Heart left ventricle (tissue), 16 donors: ENCODE measurements at regions of chr11 and their contacts with region 1.

Region 1: DNA sequence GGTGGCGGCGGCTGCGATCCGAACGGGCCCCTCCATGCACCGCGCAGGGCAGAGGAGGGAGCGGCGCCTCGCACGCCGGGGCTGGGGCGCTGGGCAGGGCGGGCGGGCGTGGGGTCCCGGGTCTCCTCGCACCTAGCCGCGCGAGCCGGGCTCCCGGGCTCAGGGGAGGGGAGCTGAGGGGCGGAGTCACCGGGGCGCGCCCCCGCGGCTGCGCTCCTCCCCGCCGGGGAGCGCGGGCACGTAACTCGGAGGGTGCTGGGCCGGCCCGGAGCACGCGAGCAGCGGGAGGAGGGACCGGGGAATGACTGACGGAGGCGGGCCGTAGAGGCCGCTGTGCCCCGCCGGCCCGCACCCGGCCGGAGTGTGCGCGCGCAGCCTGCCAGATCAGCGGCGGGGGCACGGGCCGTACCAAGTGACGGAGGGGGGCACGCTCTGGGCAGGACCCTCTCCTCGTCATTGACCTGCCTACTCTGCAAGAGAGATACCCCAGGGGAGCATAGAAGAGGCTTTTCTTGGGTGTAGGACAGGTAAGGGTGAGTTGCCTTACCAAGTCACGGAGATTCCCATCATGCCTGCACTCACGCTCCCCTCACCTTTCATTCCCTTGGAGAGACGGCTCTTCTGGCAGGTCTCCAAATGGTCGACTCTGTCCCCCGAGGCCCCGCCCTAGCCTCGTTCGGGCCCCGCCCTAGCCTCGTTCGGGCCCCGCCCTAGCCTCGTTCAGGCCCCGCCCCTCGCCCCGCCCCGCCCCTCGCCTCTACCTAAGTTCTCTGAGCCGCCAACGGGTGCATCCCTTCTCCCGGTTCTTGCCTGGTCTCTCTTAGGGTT is at the start of gene CDON:
- DNase-seq: peak; percentile 91 to 95 (median 93)
- ATAC-seq: peak; percentile 98 to 99 (median 98)
- H3K4me3 ChIP-seq: peak within 1 kb of the TSS; percentile 60 to 94 (median 73)
- H3K27ac ChIP-seq: peak within 1 kb of the TSS in 11 of 12 donors; percentile 50 to 85 (median 75)
- H3K4me1 ChIP-seq: peaks cover 0 to 20% (median 8%) of the 10 kb centered on the region in 12 donors
- H3K27me3 ChIP-seq: peaks cover 0 to 12% (median 0%) of the 10 kb centered on the region in 9 donors
- CTCF ChIP-seq: peak in 7 of 12 donors; percentile 8 to 51 (median 29)
- POLR2A ChIP-seq: peak in 1 of 2 donors; percentile 54
- total RNA-seq, gene CDON: 5.0 to 51.5 (median 7.4) TPM

Region 2: DNA sequence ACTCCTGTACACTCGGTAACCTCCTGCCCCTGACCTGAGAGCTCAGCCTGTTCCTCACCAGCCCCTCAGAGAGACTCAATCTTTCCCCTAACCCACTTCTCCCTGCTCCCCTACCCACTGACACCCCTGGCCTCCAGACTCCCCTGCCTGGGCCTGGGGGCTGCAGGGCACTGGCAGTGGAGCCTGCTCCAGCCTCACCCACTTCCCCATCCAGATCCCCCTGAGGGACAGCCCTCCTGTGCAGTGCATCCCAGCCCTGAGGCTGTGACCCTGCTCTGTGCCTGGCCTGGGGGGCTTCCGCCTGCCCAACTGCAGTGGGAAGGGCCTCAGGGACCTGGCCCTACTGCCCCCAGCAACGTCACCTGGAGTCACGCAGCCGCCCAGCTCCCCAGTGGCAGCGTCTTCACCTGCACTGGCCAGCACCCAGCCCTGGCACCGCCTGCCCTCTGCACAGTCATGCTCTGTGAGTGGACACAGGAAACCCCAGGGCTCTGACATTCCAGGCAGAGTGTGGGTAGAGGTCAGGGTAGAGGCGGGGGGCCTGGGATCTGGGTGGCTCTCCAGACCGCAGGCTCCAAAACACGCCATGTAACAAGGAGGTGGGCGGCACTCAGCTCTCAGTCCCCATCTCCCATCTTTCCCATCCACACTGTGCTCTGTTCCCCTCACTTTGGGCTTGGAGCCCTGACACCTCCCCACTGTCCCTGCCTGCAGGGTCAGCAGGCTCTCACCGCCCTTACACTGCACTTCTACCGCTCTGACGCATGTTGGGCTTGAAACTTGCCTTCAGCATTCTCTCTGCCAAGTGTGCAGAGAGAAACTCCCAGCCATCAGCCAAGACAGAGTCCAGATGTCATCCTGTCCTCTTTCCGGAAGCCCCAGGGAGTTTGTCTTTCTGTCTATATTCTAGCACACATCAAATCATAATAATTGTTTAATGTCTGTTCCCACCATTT is 111.9 kb before region 1 on chr11:
- intact Hi-C with region 1: loop called in 3 of 10 experiments (anchors 10 kb)
- DNase-seq: peak; percentile 76 to 88 (median 81)
- ATAC-seq: peak; percentile 83 to 93 (median 90)
- H3K4me3 ChIP-seq: no peak overlapping the region
- H3K27ac ChIP-seq: peak overlapping the region in 11 of 12 donors; percentile 27 to 70 (median 44)
- H3K4me1 ChIP-seq: peaks cover 3 to 27% (median 16%) of the 10 kb centered on the region in 12 donors
- H3K27me3 ChIP-seq: peaks cover 0 to 7% (median 0%) of the 10 kb centered on the region in 9 donors
- CTCF ChIP-seq: no peak
- POLR2A ChIP-seq: no peak

Region 3: DNA sequence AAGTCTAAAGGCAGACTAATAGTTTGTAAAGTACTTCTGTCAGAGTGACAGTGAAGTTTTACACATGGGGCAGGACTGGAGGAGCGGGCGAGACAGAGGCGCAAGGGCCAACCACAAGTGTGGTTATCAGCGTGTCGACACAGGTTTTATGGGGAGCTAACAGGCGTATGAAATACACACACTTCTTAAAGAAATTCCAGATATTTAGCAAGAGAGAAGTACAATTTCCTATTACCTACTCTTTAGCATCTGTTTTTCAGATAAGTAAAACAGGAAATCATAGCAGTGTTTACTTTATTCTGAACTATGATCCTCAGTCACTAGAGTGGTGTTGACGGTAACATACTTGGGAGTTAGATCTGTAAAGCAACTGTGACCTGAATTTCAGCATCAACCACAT is 94.5 kb before region 1 on chr11:
- intact Hi-C with region 1: no loop called
- DNase-seq: no peak
- ATAC-seq: no peak
- H3K4me3 ChIP-seq: no peak overlapping the region
- H3K27ac ChIP-seq: no peak overlapping the region
- H3K4me1 ChIP-seq: no peaks in the 10 kb centered on the region
- H3K27me3 ChIP-seq: no peaks in the 10 kb centered on the region
- CTCF ChIP-seq: no peak
- POLR2A ChIP-seq: no peak

Region 4: DNA sequence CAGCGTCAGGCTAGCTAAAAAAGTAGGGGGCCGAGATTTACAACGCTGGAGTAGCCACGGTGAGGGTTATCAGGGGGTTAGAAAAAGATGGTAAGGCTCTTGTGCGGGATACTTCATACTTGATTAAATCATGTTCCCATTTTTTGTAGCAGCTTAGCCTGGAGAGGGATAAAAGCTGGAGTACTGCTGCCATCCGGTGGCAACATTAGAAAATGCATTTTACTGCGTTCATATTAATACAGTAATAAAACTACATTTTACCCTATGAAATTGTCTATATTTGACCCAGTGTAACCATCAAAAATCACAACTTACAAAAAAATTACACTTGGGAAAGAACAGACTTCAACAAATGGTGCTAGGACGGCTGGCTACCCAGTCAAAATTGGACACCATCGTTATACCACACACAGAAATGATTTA is 131.2 kb after region 1 on chr11:
- intact Hi-C with region 1: loop called in 5 of 10 experiments (anchors 5 to 10 kb)
- DNase-seq: no peak
- ATAC-seq: peak; percentile 24 to 62 (median 44)
- H3K4me3 ChIP-seq: no peak overlapping the region
- H3K27ac ChIP-seq: no peak overlapping the region
- H3K4me1 ChIP-seq: peaks cover 0 to 9% (median 0%) of the 10 kb centered on the region in 12 donors
- H3K27me3 ChIP-seq: no peaks in the 10 kb centered on the region
- CTCF ChIP-seq: peak; percentile 45 to 83 (median 70)
- POLR2A ChIP-seq: no peak

Region 5: GRCh38 chr11:126211235-126212088 is 148.6 kb after region 1 on chr11 and contains the starts of genes FAM118B and RPUSD4:
- intact Hi-C with region 1: loop called in 2 of 10 experiments (anchors 5 kb)
- DNase-seq: peak; percentile 98 to 99 (median 99)
- ATAC-seq: peak; percentile 97 to 99 (median 99)
- H3K4me3 ChIP-seq: peak within 1 kb of the TSS; percentile 52 to 97 (median 80)
- H3K27ac ChIP-seq: peak within 1 kb of the TSS in 11 of 12 donors; percentile 63 to 86 (median 72)
- H3K4me1 ChIP-seq: peaks cover 0 to 43% (median 24%) of the 10 kb centered on the region in 12 donors
- H3K27me3 ChIP-seq: no peaks in the 10 kb centered on the region
- CTCF ChIP-seq: no peak
- POLR2A ChIP-seq: peak; percentile 44 to 94
- total RNA-seq, gene FAM118B: 19.0 to 41.0 (median 23.6) TPM
- total RNA-seq, gene RPUSD4: 21.0 to 50.0 (median 34.2) TPM